HCT116 (cell line): ENCODE measurements at regions of chr7 and their contacts with region 1.

Region 1: GRCh38 chr7:156969972-156970420 is 20.5 kb downstream of the NOM1 start:
- DNase-seq: no peak
- ATAC-seq: peak; percentile 75
- H3K4me3 ChIP-seq: no peak overlapping the region
- H3K27ac ChIP-seq: no peak overlapping the region
- H3K4me1 ChIP-seq: no peaks in the 10 kb centered on the region
- H3K27me3 ChIP-seq: no peaks in the 10 kb centered on the region
- CTCF ChIP-seq: peak; percentile 19 to 49 (median 49); a peak in 3 of 6 replicates
- POLR2A ChIP-seq: no peak
- RAD21 ChIP-seq: peak; percentile 59

Region 2: GRCh38 chr7:157273208-157274093 is 303.5 kb after region 1 on chr7:
- CTCF ChIA-PET with region 1: no interaction called
- POLR2A ChIA-PET with region 1: no interaction called
- RAD21 ChIA-PET with region 1: no interaction called
- intact Hi-C with region 1: loop called (anchors 5 kb)
- DNase-seq: peak; percentile 21
- ATAC-seq: peak; percentile 87
- H3K4me3 ChIP-seq: no peak overlapping the region
- H3K27ac ChIP-seq: no peak overlapping the region
- H3K4me1 ChIP-seq: peaks cover 0 to 7% of the 10 kb centered on the region in 2 experiments; a peak in 1 of 4 replicates
- H3K27me3 ChIP-seq: no peaks in the 10 kb centered on the region
- CTCF ChIP-seq: peak; percentile 88 to 98 (median 96); a peak in 5 of 6 replicates
- POLR2A ChIP-seq: no peak
- RAD21 ChIP-seq: peak; percentile 94

Region 3: DNA sequence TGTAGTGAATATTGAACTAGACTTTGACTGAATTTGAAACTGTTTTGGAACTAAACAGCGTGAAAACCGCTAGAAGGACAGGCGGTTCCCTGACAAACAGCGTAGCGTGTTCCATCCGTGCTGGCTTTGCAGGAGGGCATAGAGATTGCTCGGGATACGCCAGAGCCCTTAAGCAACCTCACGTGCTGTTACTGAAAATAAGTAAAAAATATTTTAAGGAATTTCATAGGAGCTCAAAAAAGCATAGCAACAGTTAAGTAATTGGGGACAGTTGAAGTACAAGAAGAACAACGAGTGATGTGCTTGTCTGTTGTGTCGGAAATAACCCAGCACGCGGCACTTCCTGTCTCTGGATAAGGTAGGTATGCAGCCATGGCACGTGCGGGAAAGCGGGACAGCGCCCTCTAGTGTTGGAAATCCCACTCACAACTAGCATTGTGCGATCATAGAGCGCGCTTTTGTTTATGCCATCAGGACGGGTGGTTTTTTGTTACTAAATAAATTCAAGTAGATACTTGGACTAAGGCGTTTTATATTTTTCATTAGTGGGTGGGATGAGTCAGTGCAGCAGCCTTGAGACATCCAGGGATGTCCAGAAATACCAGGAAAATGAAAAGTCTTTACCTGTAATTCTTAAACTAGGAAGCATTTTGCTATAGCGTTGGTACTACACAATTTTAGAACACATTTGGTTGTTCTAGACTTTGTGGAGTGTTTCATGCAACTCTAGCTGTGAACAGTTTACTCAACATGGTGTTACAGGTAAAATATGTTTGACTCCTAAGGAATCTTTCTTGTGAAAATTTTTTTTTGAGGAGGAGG is 417.2 kb after region 1 on chr7:
- CTCF ChIA-PET with region 1: interaction called, 3 read pairs
- POLR2A ChIA-PET with region 1: no interaction called
- RAD21 ChIA-PET with region 1: no interaction called
- intact Hi-C with region 1: loop called (anchors 10 kb)
- DNase-seq: peak; percentile 69
- ATAC-seq: peak; percentile 95
- H3K4me3 ChIP-seq: no peak overlapping the region
- H3K27ac ChIP-seq: no peak overlapping the region
- H3K4me1 ChIP-seq: peaks cover 0 to 9% of the 10 kb centered on the region in 2 experiments; a peak in 2 of 4 replicates
- H3K27me3 ChIP-seq: no peaks in the 10 kb centered on the region
- CTCF ChIP-seq: peak; percentile 66 to 87 (median 87)
- POLR2A ChIP-seq: no peak
- RAD21 ChIP-seq: peak; percentile 81